ENCODE measurements at regions of chr4 and their contacts with region 1.

Region 1: DNA sequence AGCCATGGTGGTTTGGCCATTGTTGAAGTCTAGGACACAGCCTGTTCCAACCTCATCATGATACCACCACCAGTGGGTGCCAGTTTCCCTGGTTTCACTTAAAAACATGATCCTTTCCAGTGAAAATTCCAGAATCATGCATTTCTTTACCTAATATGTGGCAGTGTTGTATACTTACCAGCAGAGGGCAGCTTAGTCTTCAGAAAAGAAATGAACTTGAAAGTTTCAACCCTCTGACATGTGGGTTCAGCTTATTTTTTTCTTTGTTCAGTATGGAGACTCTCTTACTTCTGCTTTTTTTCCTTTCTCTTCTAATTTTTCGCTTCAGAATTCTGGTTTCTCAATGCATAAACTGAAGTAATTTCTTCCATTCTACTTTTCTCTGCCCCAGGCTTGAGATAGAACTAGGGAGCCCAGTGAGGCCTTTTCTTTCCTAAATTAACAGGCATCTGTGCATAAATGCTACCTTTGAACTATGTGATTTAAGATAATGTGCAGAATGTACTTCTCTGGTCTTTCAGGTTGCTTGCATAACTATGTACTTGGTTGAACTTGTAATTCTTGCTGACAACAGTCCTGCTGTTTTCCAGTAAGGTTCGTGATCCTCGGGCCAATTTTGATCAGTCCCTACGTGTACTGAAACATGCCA is 10.7 kb downstream of the LIAS start:
- DNase-seq: peak; percentile 18
- ATAC-seq: peak; percentile 76
- H3K4me3 Mint-ChIP-seq: no peak overlapping the region
- H3K27ac Mint-ChIP-seq: peak overlapping the region; percentile 66
- H3K4me1 Mint-ChIP-seq: peaks cover 20% of the 10 kb centered on the region
- H3K27me3 Mint-ChIP-seq: no peaks in the 10 kb centered on the region

Region 2: GRCh38 chr4:39452860-39453587 is 16.5 kb before region 1 on chr4:
- CTCF ChIA-PET with region 1: interaction called, 17 read pairs
- POLR2A ChIA-PET with region 1: interaction called, 6 read pairs
- intact Hi-C with region 1: no loop called
- DNase-seq: no peak
- ATAC-seq: no peak
- H3K4me3 Mint-ChIP-seq: no peak overlapping the region
- H3K27ac Mint-ChIP-seq: no peak overlapping the region
- H3K4me1 Mint-ChIP-seq: peaks cover 49% of the 10 kb centered on the region
- H3K27me3 Mint-ChIP-seq: no peaks in the 10 kb centered on the region

Region 3: GRCh38 chr4:39658756-39659155 is 189.2 kb after region 1 on chr4:
- CTCF ChIA-PET with region 1: interaction called, 5 read pairs
- POLR2A ChIA-PET with region 1: no interaction called
- intact Hi-C with region 1: loop called in 1 of 2 experiments (anchors 2 kb)
- DNase-seq: no peak
- ATAC-seq: no peak
- H3K4me3 Mint-ChIP-seq: no peak overlapping the region
- H3K27ac Mint-ChIP-seq: no peak overlapping the region
- H3K4me1 Mint-ChIP-seq: peaks cover 4% of the 10 kb centered on the region
- H3K27me3 Mint-ChIP-seq: no peaks in the 10 kb centered on the region

Measured in activated CD4-positive, alpha-beta T cell treated with anti-CD3 and anti-CD28 coated beads for 36 hours (primary cell).